ENCODE measurements at regions of chr6 and their contacts with region 1.

Region 1: GRCh38 chr6:42879372-42880239 is at the start of gene RPL7L1:
- DNase-seq: peak; percentile 75
- H3K4me3 ChIP-seq: peak within 1 kb of the TSS; percentile 74 to 87
- H3K27ac ChIP-seq: peak within 1 kb of the TSS; percentile 89 to 94
- H3K4me1 ChIP-seq: peaks cover 0 to 3% of the 10 kb centered on the region in 2 experiments; a peak in 1 of 4 replicates
- H3K27me3 ChIP-seq: no peaks in the 10 kb centered on the region
- CTCF ChIP-seq: no peak
- EP300 ChIP-seq: peak in 1 of 2 experiments; percentile 7; a peak in 1 of 4 replicates
- RAD21 ChIP-seq: no peak
- polyA plus RNA-seq, gene RPL7L1: 22.1 and 28.7 TPM in 2 replicates

Region 2: GRCh38 chr6:42745707-42746462 is 133.7 kb before region 1 on chr6 and contains the start of gene TBCC:
- CTCF ChIA-PET with region 1: interaction called, 5 read pairs
- POLR2A ChIA-PET with region 1: interaction called, 15 read pairs
- DNase-seq: peak; percentile 97
- H3K4me3 ChIP-seq: peak within 1 kb of the TSS; percentile 75 to 82
- H3K27ac ChIP-seq: peak within 1 kb of the TSS; percentile 93 to 96
- H3K4me1 ChIP-seq: peaks cover 19 to 30% of the 10 kb centered on the region in 2 experiments; a peak in 3 of 4 replicates
- H3K27me3 ChIP-seq: no peaks in the 10 kb centered on the region
- CTCF ChIP-seq: no peak
- EP300 ChIP-seq: peak in 1 of 2 experiments; percentile 14; a peak in 2 of 4 replicates
- RAD21 ChIP-seq: no peak
- polyA plus RNA-seq, gene TBCC: 12.7 and 18.2 TPM in 2 replicates